GM12878 (cell line): ENCODE measurements at regions of chr10 and their contacts with region 1.

Region 1: DNA sequence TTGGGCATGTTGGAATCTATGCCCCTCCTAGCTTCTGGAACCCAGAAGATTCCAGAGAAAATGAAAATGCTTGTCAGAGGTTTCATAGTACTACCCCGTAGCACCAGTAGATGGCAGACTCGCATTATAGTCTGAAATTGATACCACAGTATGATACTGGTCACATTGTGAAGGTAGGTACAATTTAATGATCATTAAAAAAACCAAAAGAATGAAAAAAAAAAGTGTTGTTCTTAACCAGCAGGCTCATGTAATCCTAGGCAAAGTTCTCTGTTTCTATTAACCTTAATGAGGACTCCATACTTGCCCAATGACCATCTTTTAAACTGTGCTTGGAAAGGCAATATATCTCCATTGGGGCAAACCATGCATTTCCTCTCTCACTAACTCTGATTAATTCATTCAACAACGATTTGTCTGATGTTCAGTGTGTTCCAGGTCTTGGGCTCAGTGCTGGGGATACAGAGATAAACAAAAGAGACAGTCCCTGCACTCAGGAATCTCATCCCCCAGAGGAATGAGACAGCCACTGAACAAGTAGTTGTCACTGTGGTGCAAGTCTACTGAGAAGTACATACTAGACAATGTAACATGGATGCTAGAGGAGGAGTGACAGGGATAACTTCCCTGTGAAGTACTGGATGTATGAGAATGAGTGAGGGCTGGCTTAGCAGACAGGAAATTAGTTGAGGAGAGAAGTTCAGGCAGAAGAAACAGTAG is 223.5 kb upstream of the PHYHIPL start:
- DNase-seq: peak; percentile 19
- ATAC-seq: peak; percentile 90
- H3K4me3 ChIP-seq: no peak overlapping the region
- H3K27ac ChIP-seq: no peak overlapping the region
- H3K4me1 ChIP-seq: no peaks in the 10 kb centered on the region
- H3K27me3 ChIP-seq: no peaks in the 10 kb centered on the region
- CTCF ChIP-seq: peak; percentile 76 to 91 (median 80); a peak in 5 of 6 replicates
- EP300 ChIP-seq: no peak
- POLR2A ChIP-seq: no peak
- RAD21 ChIP-seq: peak; percentile 98

Region 2: GRCh38 chr10:58781873-58782488 is 170.9 kb before region 1 on chr10:
- CTCF ChIA-PET with region 1: no interaction called
- POLR2A ChIA-PET with region 1: no interaction called
- RAD21 ChIA-PET with region 1: interaction called, 8 read pairs
- SMC1A ChIA-PET with region 1: interaction called, 6 read pairs
- in situ Hi-C with region 1: no loop called
- intact Hi-C with region 1: loop called (anchors 2 kb)
- DNase-seq: peak; percentile 8
- ATAC-seq: peak; percentile 77
- H3K4me3 ChIP-seq: no peak overlapping the region
- H3K27ac ChIP-seq: no peak overlapping the region
- H3K4me1 ChIP-seq: no peaks in the 10 kb centered on the region
- H3K27me3 ChIP-seq: no peaks in the 10 kb centered on the region
- CTCF ChIP-seq: peak in 2 of 3 experiments; percentile 47 to 70; a peak in 4 of 6 replicates
- EP300 ChIP-seq: no peak
- POLR2A ChIP-seq: no peak
- RAD21 ChIP-seq: peak; percentile 77

Region 3: DNA sequence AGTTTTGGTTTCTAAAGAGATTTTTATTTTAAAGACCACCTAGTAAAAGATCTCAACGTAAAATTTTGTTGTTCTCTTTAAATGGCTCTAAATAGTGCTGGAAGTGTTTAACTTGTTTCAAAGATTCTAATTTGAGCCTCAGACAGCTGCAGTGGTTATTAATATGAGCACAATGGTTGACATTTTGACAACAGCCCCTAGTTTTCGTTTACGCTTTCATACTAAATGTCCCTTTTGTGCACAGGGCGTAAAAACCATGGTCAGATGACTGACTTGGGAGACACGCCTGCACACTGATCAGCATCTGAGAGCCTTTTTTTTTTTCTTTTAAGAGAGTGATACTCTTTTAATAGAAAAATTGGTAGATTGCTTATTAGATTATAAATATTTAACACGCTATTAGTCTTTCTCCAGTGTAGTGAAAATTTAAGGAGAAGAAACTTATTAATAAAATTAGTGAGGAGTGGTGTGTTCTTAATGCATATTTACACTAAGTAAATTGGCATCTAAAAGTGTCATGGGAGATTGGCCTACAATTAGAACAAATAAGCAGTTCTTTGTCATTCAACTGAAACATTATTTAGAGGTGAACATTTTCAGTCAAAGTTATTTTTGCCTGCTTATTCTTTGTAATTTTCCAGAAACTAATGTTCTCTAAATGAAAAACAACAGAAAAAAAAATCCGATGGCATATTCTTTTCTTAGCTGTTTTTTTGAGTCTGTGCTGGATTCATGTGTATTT is 40.7 kb after region 1 on chr10:
- CTCF ChIA-PET with region 1: interaction called, 4 read pairs
- POLR2A ChIA-PET with region 1: interaction called, 5 read pairs
- RAD21 ChIA-PET with region 1: interaction called, 14 read pairs
- SMC1A ChIA-PET with region 1: interaction called, 55 read pairs
- in situ Hi-C with region 1: no loop called
- intact Hi-C with region 1: loop called (anchors 2 kb)
- DNase-seq: peak; percentile 63
- ATAC-seq: peak; percentile 88
- H3K4me3 ChIP-seq: no peak overlapping the region
- H3K27ac ChIP-seq: peak overlapping the region; percentile 31; the same call in 1 of the 2 replicates
- H3K4me1 ChIP-seq: peaks cover 38% of the 10 kb centered on the region
- H3K27me3 ChIP-seq: no peaks in the 10 kb centered on the region
- CTCF ChIP-seq: no peak
- EP300 ChIP-seq: peak; percentile 75 to 95; a peak in 3 of 4 replicates
- POLR2A ChIP-seq: no peak
- RAD21 ChIP-seq: peak; percentile 19; the same call in 1 of the 2 replicates

Region 4: DNA sequence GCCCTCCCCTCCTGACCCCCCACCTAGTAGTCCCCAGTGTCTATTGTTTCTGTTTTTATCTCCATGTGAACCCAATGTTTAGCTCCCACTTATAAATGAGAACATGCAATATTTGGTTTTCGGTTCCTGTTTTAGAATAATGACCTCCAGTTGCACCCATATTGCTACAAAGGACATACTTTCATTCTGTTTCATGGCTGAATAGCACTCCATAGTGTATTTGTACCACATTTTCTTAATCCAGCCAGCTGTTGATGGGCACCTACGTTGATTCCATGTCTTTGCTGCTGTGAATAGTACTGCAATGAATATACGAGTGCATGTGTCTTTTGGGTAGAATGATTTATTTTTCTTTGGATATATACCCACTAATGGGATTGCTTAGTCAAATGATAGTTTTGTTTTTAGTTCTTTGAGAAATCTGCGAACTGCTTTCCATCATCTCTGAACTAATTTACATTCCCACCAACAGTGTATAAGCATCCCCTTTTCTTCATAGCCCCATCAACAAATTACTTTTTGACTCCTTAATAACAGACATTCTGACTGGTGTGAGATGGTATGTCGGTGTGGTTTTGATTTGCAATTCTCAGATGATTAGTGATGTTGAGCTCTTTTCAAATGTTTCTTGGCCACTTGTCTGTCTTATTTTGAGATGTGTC is 95.2 kb after region 1 on chr10:
- CTCF ChIA-PET with region 1: interaction called, 5 read pairs
- POLR2A ChIA-PET with region 1: no interaction called
- RAD21 ChIA-PET with region 1: interaction called, 27 read pairs
- SMC1A ChIA-PET with region 1: interaction called, 25 read pairs
- in situ Hi-C with region 1: no loop called
- intact Hi-C with region 1: loop called (anchors 1 kb)
- DNase-seq: peak; percentile 84
- ATAC-seq: peak; percentile 90
- H3K4me3 ChIP-seq: peak overlapping the region; percentile 33; the same call in 1 of the 2 replicates
- H3K27ac ChIP-seq: peak overlapping the region; percentile 65
- H3K4me1 ChIP-seq: peaks cover 15% of the 10 kb centered on the region
- H3K27me3 ChIP-seq: no peaks in the 10 kb centered on the region; a peak in 1 of 4 replicates
- CTCF ChIP-seq: no peak
- EP300 ChIP-seq: peak; percentile 68 to 97
- POLR2A ChIP-seq: no peak
- RAD21 ChIP-seq: peak; percentile 27; the same call in 1 of the 2 replicates

Region 5: DNA sequence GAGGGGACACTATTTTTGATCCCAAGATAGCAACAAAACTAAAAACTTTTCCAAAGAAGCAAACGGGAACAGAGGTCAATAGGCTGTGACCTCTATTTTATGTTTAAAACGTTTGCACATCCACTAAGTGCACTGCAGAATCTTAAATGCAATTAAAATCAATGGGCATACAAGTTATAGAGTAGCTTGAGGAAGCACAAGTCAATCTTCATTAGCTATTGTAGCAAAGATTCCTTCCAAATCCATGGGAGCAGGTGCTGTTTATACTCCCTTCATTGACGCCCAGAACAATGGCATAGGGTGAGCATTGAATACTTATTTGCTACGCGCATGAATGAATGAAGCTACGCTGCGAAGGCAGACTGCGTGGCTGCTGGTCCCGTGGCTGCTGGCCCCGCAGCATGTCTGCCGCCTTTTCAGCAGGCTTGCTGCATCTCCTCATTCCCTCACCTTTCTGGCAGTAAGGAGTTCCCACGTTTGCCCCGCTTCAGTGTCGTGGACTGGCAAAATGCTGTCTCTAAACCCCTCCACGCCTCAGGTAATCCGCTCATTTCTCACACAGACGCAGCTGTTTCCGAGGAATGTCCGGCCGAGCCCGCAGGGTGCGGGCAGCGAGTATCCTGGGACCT is 222.7 kb after region 1 on chr10:
- CTCF ChIA-PET with region 1: interaction called, 38 read pairs
- POLR2A ChIA-PET with region 1: no interaction called
- RAD21 ChIA-PET with region 1: interaction called, 7 read pairs
- SMC1A ChIA-PET with region 1: interaction called, 54 read pairs
- in situ Hi-C with region 1: loop called (anchors 5 kb)
- intact Hi-C with region 1: no loop called
- DNase-seq: no peak
- ATAC-seq: no peak
- H3K4me3 ChIP-seq: no peak overlapping the region
- H3K27ac ChIP-seq: no peak overlapping the region
- H3K4me1 ChIP-seq: no peaks in the 10 kb centered on the region
- H3K27me3 ChIP-seq: peaks cover 0 to 4% of the 10 kb centered on the region in 2 experiments; a peak in 1 of 4 replicates
- CTCF ChIP-seq: no peak
- EP300 ChIP-seq: no peak
- POLR2A ChIP-seq: no peak
- RAD21 ChIP-seq: no peak

Region 6: GRCh38 chr10:59240582-59241183 is 287.8 kb after region 1 on chr10:
- CTCF ChIA-PET with region 1: interaction called, 17 read pairs
- POLR2A ChIA-PET with region 1: no interaction called
- RAD21 ChIA-PET with region 1: interaction called, 11 read pairs
- SMC1A ChIA-PET with region 1: interaction called, 17 read pairs
- in situ Hi-C with region 1: loop called (anchors 5 kb)
- intact Hi-C with region 1: loop called (anchors 1 kb)
- DNase-seq: no peak
- ATAC-seq: peak; percentile 31; the same call in 1 of the 3 replicates
- H3K4me3 ChIP-seq: no peak overlapping the region
- H3K27ac ChIP-seq: no peak overlapping the region
- H3K4me1 ChIP-seq: no peaks in the 10 kb centered on the region
- H3K27me3 ChIP-seq: no peaks in the 10 kb centered on the region
- CTCF ChIP-seq: peak; percentile 30 to 50 (median 48); a peak in 4 of 6 replicates
- EP300 ChIP-seq: no peak
- POLR2A ChIP-seq: no peak
- RAD21 ChIP-seq: peak; percentile 64

Region 7: DNA sequence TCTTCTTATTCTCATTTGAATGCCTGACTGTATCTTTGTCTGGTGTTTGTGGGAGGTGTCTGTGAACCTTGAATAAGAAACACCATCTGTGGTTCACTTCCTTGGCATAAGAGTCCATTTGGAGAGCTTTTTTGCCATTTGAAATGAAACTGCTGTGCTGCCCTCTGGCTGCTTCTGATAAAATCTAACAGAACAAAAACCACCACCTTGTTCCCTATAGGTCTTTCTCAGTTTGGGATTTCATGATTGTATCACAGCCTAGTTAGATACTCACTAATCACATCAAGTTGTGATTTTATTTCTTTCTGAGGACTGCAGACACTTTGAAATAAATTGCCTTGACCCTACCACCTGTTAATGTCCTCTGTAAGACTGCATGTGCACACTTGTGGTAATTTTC is 512.2 kb after region 1 on chr10:
- CTCF ChIA-PET with region 1: interaction called, 10 read pairs
- POLR2A ChIA-PET with region 1: no interaction called
- RAD21 ChIA-PET with region 1: interaction called, 4 read pairs
- SMC1A ChIA-PET with region 1: interaction called, 3 read pairs
- in situ Hi-C with region 1: no loop called
- intact Hi-C with region 1: loop called (anchors 1 kb)
- DNase-seq: no peak
- ATAC-seq: no peak
- H3K4me3 ChIP-seq: no peak overlapping the region
- H3K27ac ChIP-seq: no peak overlapping the region
- H3K4me1 ChIP-seq: no peaks in the 10 kb centered on the region
- H3K27me3 ChIP-seq: no peaks in the 10 kb centered on the region
- CTCF ChIP-seq: peak in 1 of 3 experiments; percentile 19; a peak in 1 of 6 replicates
- EP300 ChIP-seq: no peak
- POLR2A ChIP-seq: no peak
- RAD21 ChIP-seq: no peak